ENCODE measurements at regions of chr7 and their contacts with region 1.

Region 1: GRCh38 chr7:71723859-71724258 is 591.9 kb downstream of the GALNT17 start:
- DNase-seq: no peak
- ATAC-seq: no peak
- H3K4me3 ChIP-seq: no peak overlapping the region
- H3K27ac ChIP-seq: no peak overlapping the region
- H3K4me1 ChIP-seq: no peaks in the 10 kb centered on the region
- H3K27me3 ChIP-seq: no peaks in the 10 kb centered on the region
- CTCF ChIP-seq: no peak

Region 2: DNA sequence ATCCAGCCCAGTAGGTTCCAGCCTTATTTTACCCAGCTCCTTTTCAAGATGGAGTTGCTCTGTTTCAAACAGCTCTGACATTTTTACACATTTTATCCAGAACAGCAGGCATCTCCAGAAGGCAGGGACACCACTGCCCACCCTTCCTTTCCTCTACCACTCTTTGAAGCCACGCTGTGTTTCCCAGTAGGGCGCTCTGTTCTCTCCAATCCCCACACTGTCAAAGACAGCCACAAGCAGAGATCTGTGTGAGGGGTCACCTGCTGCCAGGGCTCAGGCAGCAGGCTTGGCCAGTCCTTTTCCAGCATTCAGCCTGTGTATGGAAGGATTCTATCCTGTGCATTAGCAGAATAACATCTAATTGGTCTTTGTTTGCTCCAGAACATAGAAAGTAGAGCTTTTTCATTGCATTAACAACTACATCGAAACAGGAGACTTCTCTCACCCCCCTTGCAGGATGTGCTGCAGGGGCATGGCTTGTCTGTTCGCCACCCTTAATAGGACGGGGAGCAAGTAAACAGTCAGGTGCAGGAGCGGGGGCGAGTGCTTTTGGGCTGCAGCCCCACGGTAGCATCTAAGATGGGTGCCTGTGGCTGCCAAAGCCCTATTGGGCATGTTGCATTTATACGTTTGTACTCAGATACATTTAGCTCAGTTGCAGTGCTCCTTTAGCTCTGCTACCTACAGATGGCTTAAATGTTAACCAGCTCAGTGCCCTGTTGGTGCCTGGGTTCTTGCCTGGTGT is 265.8 kb before region 1 on chr7:
- intact Hi-C with region 1: loop called in 1 of 2 experiments (anchors 10 kb)
- DNase-seq: no peak
- ATAC-seq: no peak
- H3K4me3 ChIP-seq: no peak overlapping the region
- H3K27ac ChIP-seq: no peak overlapping the region
- H3K4me1 ChIP-seq: no peaks in the 10 kb centered on the region
- H3K27me3 ChIP-seq: no peaks in the 10 kb centered on the region
- CTCF ChIP-seq: no peak

Region 3: GRCh38 chr7:71661671-71662224 is 62.1 kb before region 1 on chr7:
- intact Hi-C with region 1: no loop called
- DNase-seq: no peak
- ATAC-seq: no peak
- H3K4me3 ChIP-seq: no peak overlapping the region
- H3K27ac ChIP-seq: no peak overlapping the region
- H3K4me1 ChIP-seq: no peaks in the 10 kb centered on the region
- H3K27me3 ChIP-seq: no peaks in the 10 kb centered on the region
- CTCF ChIP-seq: no peak

Measured in left lung (tissue), 14 donors.